Activated naive CD4-positive, alpha-beta T cell treated with anti-CD3 and anti-CD28 coated beads, Interleukin-2, amount 10 ng/mL, durations not matched to agents 7 days and 5 days (primary cell): ENCODE measurements at regions of chrX and their contacts with region 1.

Region 1: DNA sequence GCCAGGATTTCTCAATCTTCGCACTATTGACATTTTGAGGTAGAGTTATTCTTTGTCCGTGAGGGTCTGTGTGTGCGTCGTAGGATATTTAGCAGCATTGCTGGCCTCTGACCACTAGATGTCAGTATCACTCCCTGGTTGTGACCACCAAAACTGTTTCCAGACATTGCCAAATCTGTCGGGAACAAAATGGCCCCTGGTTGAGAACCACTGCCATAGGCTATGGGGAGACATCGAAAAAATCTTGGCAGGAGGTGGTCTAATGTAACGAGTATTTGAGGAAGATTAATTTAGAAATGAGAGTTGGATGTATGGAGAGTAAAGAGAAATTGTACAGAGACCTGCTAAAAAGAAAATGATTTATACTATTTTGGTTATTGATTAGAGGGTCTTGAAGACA is 108.4 kb downstream of the DOCK11 start:
- DNase-seq: peak; percentile 26
- H3K4me3 Mint-ChIP-seq: no peak overlapping the region
- H3K27ac Mint-ChIP-seq: peak overlapping the region; percentile 67
- H3K4me1 Mint-ChIP-seq: peaks cover 8% of the 10 kb centered on the region
- H3K27me3 Mint-ChIP-seq: no peaks in the 10 kb centered on the region

Region 2: GRCh38 chrX:118459494-118459893 is 144.5 kb before region 1 on chrX:
- CTCF ChIA-PET with region 1: interaction called, 55 read pairs
- DNase-seq: peak; percentile 29
- H3K4me3 Mint-ChIP-seq: no peak overlapping the region
- H3K27ac Mint-ChIP-seq: no peak overlapping the region
- H3K4me1 Mint-ChIP-seq: peaks cover 4% of the 10 kb centered on the region
- H3K27me3 Mint-ChIP-seq: peaks cover 4% of the 10 kb centered on the region

Region 3: GRCh38 chrX:118583781-118584180 is 20.2 kb before region 1 on chrX:
- CTCF ChIA-PET with region 1: no interaction called
- DNase-seq: no peak
- H3K4me3 Mint-ChIP-seq: no peak overlapping the region
- H3K27ac Mint-ChIP-seq: no peak overlapping the region
- H3K4me1 Mint-ChIP-seq: no peaks in the 10 kb centered on the region
- H3K27me3 Mint-ChIP-seq: no peaks in the 10 kb centered on the region

Region 4: GRCh38 chrX:118839334-118839958 is 235.5 kb after region 1 on chrX:
- CTCF ChIA-PET with region 1: no interaction called
- DNase-seq: peak; percentile 65
- H3K4me3 Mint-ChIP-seq: peak overlapping the region; percentile 0
- H3K27ac Mint-ChIP-seq: no peak overlapping the region
- H3K4me1 Mint-ChIP-seq: no peaks in the 10 kb centered on the region
- H3K27me3 Mint-ChIP-seq: peaks cover 29% of the 10 kb centered on the region